OCI-LY7 (cell line): ENCODE measurements at regions of chr20 and their contacts with region 1.

Region 1: DNA sequence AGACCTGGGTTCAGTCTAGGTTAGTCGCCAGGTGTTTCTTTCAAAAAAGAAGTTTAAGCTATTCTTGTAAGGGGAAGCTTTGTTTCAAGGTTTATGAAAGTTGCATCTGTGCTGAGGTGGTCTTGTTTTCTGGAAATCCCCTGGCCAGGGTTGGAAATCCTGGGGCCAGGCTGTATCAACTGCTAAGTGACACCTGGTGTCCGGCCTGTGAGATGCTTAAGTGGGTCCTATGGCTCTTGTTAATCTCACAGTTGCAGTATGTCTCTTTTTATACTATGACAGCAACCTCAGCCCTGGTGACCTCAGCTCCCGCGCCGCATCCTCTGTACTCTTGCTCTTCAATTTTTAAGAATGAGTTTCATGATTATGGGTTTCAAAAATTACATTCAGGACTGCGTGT is 72.0 kb downstream of the CHMP4B start:
- DNase-seq: peak; percentile 98
- H3K4me3 ChIP-seq: peak overlapping the region; percentile 38
- H3K27ac ChIP-seq: peak overlapping the region; percentile 97
- H3K4me1 ChIP-seq: peaks cover 82% of the 10 kb centered on the region
- CTCF ChIP-seq: peak; percentile 61

Region 2: DNA sequence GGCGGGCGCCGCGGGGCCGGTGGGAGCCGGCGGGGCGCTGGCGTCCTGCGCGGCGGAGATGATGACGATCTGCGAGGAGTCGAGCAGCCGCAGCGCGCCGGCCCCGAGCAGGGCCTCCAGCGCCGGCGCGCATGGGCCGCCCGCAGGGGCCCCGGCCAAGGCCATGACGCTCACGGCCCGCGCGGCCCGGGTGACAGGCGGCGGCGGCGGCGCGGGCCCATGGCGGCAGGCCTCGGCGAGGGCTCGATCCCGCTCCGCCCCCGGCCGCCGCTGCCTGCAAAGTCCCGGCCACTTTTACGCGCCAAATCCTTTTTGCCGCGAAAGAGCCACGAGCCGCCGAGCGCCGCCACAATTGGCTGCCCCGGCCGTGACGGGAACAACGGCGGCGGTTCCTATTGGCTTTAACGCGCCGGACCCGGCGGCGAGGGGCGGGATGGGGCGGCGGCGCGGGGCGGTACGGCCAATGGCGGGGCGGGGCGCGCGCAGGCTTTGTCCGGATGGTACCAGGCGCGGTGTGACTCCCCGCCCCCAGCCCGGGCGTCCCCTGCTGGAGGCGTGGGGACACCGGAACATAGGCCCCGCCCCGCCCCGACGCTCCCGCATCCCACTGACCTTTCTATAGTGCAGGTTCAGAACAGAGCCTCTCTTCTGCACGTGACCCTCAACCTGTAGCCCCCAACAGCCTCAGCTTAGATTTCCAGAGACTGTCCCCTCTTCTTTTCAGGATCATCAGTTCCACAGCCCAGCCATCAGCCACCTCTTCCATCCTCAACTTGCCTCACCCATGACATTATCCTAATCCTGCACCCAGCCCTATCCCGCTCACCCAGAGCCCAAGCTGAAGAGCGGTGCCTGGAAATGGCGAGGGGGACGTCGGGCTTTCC is 196.8 kb before region 1 on chr20 and contains the start of gene E2F1:
- CTCF ChIA-PET with region 1: no interaction called
- POLR2A ChIA-PET with region 1: no interaction called
- intact Hi-C with region 1: loop called (anchors 5 kb)
- DNase-seq: peak; percentile 97
- H3K4me3 ChIP-seq: peak within 1 kb of the TSS; percentile 90
- H3K27ac ChIP-seq: peak within 1 kb of the TSS; percentile 94
- H3K4me1 ChIP-seq: peaks cover 71% of the 10 kb centered on the region
- CTCF ChIP-seq: 0 out of 2 replicates have a peak, but pooled peaks have one; percentile 50
- total RNA-seq, gene E2F1: 128 and 135 TPM in 2 replicates

Region 3: GRCh38 chr20:33915726-33916331 is 32.7 kb after region 1 on chr20:
- CTCF ChIA-PET with region 1: interaction called, 5 read pairs
- POLR2A ChIA-PET with region 1: interaction called, 12 read pairs
- intact Hi-C with region 1: loop called (anchors 1 kb)
- DNase-seq: peak; percentile 58
- H3K4me3 ChIP-seq: no peak overlapping the region
- H3K27ac ChIP-seq: peak overlapping the region; percentile 74
- H3K4me1 ChIP-seq: peaks cover 83% of the 10 kb centered on the region
- CTCF ChIP-seq: peak; percentile 89

Region 4: DNA sequence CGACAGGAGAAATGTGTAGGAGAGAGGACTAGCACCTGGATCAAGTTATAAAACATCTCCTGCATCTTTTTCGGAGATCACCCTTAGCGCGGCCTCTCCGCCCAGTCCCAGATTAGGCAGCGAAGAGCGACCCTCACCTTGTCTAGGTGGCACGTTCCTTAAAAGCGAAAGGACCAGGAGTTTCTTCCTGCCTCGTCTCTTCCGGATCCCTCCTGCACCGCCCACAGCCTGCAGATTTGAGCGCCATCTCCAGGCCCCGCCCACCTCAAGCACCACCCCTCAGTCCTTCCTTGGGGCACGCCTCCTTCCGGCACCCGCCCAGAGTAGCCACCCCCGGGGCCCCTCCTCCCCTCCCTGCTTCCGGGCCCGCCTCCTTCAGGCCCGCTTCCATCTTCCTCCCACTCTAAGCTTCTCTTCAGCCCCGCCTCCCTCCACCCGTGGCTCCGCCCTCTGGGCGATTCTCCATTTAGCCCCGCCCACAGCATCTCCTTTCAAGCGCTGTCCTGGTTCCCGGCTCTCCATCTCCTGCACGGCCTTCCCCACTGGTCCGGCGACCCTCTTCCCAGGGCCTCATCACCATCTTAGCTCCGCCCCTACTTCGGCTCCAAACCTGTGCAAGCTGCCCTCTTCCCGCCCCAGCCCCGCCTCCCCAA is 109.9 kb after region 1 on chr20:
- CTCF ChIA-PET with region 1: interaction called, 4 read pairs
- POLR2A ChIA-PET with region 1: interaction called, 6 read pairs
- intact Hi-C with region 1: loop called (anchors 1 kb)
- DNase-seq: peak; percentile 98
- H3K4me3 ChIP-seq: peak overlapping the region; percentile 99
- H3K27ac ChIP-seq: peak overlapping the region; percentile 78
- H3K4me1 ChIP-seq: peaks cover 42% of the 10 kb centered on the region
- CTCF ChIP-seq: no peak; the same call in 1 of the 2 replicates

Region 5: GRCh38 chr20:34022154-34022838 is 139.1 kb after region 1 on chr20:
- CTCF ChIA-PET with region 1: no interaction called
- POLR2A ChIA-PET with region 1: no interaction called
- intact Hi-C with region 1: loop called (anchors 5 kb)
- DNase-seq: peak; percentile 68
- H3K4me3 ChIP-seq: no peak overlapping the region
- H3K27ac ChIP-seq: peak overlapping the region; percentile 36
- H3K4me1 ChIP-seq: peaks cover 56% of the 10 kb centered on the region
- CTCF ChIP-seq: peak; percentile 82